PC-3 (cell line): ENCODE measurements at regions of chr12 and their contacts with region 1.

Region 1: DNA sequence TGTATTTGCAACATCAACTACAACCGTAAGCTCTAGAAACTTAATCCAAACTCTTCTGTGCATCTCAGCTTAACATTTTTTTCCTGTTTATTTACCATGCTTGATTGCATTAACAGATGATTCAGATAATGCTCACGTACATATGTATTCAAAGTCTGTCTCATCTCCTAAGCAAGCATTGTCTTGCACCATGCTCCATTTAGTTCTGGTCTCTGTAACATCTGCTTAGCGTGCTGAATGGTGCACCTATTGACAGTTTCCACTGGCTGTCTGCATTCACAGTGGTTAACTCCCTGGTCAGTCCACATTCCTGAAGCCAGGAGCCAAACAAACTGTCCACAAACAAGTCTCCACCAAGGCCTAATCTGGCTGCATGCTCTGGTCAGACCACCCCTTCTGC is 83.8 kb downstream of the KNTC1 start:
- DNase-seq: peak; percentile 96
- ATAC-seq: peak; percentile 99
- H3K4me3 ChIP-seq: peak overlapping the region; percentile 30
- H3K27ac ChIP-seq: peak overlapping the region; percentile 89
- H3K4me1 ChIP-seq: peaks cover 26% of the 10 kb centered on the region
- H3K27me3 ChIP-seq: no peaks in the 10 kb centered on the region
- CTCF ChIP-seq: no peak

Region 2: DNA sequence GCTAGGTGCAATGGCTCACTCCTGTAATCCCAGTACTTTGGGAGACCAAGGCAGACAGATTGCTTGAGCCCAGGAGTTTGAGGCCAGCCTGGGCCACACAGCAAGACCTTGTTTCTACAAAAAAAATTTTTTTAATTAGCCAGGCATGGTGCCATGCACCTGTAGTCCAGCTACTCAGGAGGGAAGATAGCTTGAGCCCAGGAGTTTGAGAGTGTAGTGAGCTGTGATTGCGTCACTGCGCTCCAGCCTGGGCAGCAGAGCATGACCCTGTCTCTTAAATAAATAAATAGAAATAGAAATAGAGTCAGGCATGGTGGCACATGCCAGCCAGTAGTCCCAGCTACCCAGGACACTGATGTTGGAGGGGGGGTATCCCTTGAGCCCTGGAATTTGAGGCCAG is 151.7 kb before region 1 on chr12:
- CTCF ChIA-PET with region 1: no interaction called
- POLR2A ChIA-PET with region 1: no interaction called
- intact Hi-C with region 1: no loop called
- DNase-seq: no peak
- ATAC-seq: no peak
- H3K4me3 ChIP-seq: no peak overlapping the region
- H3K27ac ChIP-seq: no peak overlapping the region
- H3K4me1 ChIP-seq: peaks cover 15% of the 10 kb centered on the region
- H3K27me3 ChIP-seq: no peaks in the 10 kb centered on the region
- CTCF ChIP-seq: no peak

Region 3: DNA sequence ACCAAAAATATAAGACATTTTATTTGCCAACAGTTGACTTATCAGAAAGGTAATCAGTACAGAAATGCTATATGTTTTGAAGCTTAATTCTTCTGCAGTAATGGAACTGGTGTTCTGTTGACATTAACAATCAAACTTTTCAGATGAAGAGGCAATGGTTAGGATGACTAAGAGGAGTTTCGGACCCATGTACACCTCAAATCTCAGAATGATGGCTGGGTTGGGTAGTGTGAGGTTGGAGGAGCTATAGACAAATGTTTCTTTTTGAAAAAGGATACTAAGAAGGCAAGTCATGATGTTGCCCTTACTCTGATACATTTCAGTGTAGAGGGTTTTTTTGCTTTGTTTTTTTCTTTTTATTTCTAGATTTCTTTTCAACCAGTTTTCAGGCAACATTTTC is 17.0 kb before region 1 on chr12:
- CTCF ChIA-PET with region 1: no interaction called
- POLR2A ChIA-PET with region 1: no interaction called
- intact Hi-C with region 1: loop called (anchors 2 kb)
- DNase-seq: no peak
- ATAC-seq: no peak
- H3K4me3 ChIP-seq: no peak overlapping the region
- H3K27ac ChIP-seq: no peak overlapping the region
- H3K4me1 ChIP-seq: no peaks in the 10 kb centered on the region
- H3K27me3 ChIP-seq: no peaks in the 10 kb centered on the region
- CTCF ChIP-seq: no peak

Region 4: DNA sequence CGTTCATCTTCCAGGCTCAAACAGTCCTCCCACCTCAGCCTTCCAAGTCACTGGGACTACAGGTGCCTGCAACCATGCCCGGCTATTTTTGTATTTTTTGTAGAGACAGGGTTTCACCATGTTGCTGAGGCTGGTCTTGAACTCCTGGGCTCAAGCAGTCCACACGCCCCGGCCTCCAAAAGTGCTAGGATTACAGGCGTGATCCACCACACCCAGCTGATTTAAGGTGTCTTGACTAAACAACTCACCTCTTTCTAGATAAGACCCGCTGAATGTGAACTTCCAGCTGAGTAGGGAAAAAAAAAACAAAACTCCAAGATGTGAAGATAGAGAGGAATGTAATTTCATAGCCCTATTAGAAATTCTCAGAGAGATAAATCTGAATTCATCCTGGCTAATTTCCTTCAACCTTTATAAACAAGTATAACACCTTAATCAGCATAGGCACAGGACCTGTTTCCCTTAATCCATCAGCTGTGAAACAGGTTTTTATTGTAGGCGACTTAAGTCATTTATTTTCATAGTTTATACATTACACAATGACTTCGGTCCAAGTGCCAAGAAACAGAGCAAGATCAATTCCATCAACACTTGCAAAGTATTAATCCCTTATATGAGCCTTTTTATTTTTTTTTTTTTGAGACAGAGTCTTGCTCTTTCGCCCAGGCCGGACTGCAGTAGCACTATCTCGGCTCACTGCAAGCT is 40.8 kb after region 1 on chr12:
- CTCF ChIA-PET with region 1: no interaction called
- POLR2A ChIA-PET with region 1: no interaction called
- intact Hi-C with region 1: no loop called
- DNase-seq: no peak
- ATAC-seq: no peak
- H3K4me3 ChIP-seq: no peak overlapping the region
- H3K27ac ChIP-seq: no peak overlapping the region
- H3K4me1 ChIP-seq: peaks cover 2% of the 10 kb centered on the region
- H3K27me3 ChIP-seq: no peaks in the 10 kb centered on the region
- CTCF ChIP-seq: no peak